K562 (cell line): ENCODE measurements at regions of chr19 and their contacts with region 1.

Region 1: DNA sequence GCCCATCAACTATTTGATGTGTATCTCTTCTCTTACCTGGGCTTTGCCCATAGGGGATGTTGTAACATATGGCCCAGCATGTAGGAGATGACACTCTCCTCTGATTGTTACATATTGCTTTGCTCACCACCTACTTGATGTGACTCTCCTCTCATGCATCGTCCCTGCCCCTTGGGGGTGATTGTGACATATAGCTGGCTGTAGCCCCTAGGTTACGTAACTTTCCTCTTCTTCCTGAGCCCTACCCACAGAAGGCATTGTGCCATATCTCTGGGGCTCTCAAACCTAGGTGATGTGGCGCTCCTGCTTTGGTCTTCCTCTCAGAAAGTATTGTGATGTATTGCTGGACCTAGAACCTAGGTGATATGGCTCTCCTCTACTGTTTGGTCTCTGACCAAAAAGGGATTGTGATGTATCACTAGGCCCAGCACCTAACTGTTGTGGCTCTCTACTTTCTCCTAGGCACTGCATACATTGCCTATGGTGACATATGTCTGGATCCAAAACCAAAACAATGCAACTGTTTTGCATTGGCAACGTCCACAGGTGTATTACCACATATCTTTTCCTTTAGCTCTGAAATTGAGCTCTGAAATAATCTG is 71.9 kb upstream of the ZNF724 start:
- DNase-seq: no peak
- ATAC-seq: no peak
- H3K4me3 ChIP-seq: no peak overlapping the region
- H3K27ac ChIP-seq: no peak overlapping the region
- H3K4me1 ChIP-seq: no peaks in the 10 kb centered on the region
- H3K27me3 ChIP-seq: no peaks in the 10 kb centered on the region
- CTCF ChIP-seq: no peak
- EP300 ChIP-seq: no peak
- POLR2A ChIP-seq: no peak
- RAD21 ChIP-seq: no peak

Region 2: GRCh38 chr19:23470873-23471545 is 149.0 kb after region 1 on chr19:
- CTCF ChIA-PET with region 1: no interaction called
- POLR2A ChIA-PET with region 1: no interaction called
- in situ Hi-C with region 1: no loop called
- intact Hi-C with region 1: loop called (anchors 5 kb)
- DNase-seq: no peak
- ATAC-seq: no peak
- H3K4me3 ChIP-seq: no peak overlapping the region
- H3K27ac ChIP-seq: no peak overlapping the region
- H3K4me1 ChIP-seq: no peaks in the 10 kb centered on the region
- H3K27me3 ChIP-seq: no peaks in the 10 kb centered on the region
- CTCF ChIP-seq: no peak
- EP300 ChIP-seq: no peak
- POLR2A ChIP-seq: no peak
- RAD21 ChIP-seq: no peak

Region 3: GRCh38 chr19:23817519-23817918 is 495.5 kb after region 1 on chr19:
- CTCF ChIA-PET with region 1: no interaction called
- POLR2A ChIA-PET with region 1: no interaction called
- in situ Hi-C with region 1: no loop called
- intact Hi-C with region 1: no loop called
- DNase-seq: peak; percentile 22 to 73 (median 32)
- ATAC-seq: peak; percentile 95
- H3K4me3 ChIP-seq: no peak overlapping the region
- H3K27ac ChIP-seq: no peak overlapping the region
- H3K4me1 ChIP-seq: no peaks in the 10 kb centered on the region
- H3K27me3 ChIP-seq: no peaks in the 10 kb centered on the region
- CTCF ChIP-seq: peak; percentile 49 to 60 (median 52)
- EP300 ChIP-seq: no peak
- POLR2A ChIP-seq: 0 out of 2 replicates have a peak, but pooled peaks have one; percentile 29
- RAD21 ChIP-seq: peak in 1 of 2 experiments; percentile 50; a peak in 2 of 4 replicates